BJ (cell line): ENCODE measurements at regions of chr10 and their contacts with region 1.

Region 1: DNA sequence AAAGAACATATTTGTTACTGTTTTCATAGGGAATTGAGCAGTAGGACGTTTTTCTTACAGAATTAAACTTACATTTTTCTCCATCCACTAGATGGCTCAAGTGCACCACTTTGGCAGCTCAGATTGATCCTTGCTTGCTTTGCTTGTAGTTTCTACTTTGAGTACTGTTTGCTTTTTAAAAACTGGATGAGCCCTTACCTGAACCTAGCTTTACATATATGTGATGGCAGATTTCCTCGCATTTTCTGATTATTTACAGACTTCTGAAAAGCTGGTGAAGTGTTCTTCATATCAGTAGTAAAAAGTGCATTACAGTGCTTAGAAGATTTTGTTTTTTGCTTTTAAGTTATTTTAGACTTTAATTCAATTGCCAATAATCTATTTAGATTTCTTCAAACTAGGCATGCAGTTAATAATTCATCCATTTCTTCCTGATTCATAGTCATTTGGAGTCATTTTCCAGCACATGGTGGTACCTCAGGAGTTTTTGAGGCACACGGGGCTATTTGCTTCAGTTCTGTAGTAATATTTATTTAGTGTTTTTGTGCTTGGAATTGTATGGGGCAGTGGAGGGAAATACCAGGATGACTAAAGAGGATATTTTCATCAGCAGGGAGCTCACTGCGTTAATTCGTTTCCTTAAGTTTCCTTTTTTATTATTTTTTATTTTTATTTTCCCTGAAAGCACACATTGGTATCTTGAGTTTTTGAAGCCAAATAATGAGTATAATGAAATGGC is 57.3 kb downstream of the MAPK8 start:
- DNase-seq: peak; percentile 37
- H3K4me3 ChIP-seq: no peak overlapping the region
- H3K27me3 ChIP-seq: no peaks in the 10 kb centered on the region
- CTCF ChIP-seq: peak; percentile 64

Region 2: DNA sequence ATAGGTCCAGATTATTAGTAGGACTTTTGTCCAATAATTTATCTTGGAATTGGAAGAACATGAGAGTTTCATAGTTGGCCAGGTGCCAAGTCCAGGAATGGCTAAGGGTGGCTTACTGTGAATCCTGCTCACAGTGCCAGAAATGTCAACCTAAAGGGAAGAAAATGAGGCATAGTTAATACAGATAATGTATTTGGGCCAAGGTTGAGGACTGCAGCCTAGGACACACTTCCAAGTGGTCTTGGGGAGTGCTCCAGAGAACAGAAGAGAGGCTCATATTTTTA is 20.9 kb after region 1 on chr10:
- CTCF ChIA-PET with region 1: interaction called, 13 read pairs
- POLR2A ChIA-PET with region 1: no interaction called
- DNase-seq: no peak
- H3K4me3 ChIP-seq: no peak overlapping the region
- H3K27me3 ChIP-seq: no peaks in the 10 kb centered on the region
- CTCF ChIP-seq: no peak

Region 3: DNA sequence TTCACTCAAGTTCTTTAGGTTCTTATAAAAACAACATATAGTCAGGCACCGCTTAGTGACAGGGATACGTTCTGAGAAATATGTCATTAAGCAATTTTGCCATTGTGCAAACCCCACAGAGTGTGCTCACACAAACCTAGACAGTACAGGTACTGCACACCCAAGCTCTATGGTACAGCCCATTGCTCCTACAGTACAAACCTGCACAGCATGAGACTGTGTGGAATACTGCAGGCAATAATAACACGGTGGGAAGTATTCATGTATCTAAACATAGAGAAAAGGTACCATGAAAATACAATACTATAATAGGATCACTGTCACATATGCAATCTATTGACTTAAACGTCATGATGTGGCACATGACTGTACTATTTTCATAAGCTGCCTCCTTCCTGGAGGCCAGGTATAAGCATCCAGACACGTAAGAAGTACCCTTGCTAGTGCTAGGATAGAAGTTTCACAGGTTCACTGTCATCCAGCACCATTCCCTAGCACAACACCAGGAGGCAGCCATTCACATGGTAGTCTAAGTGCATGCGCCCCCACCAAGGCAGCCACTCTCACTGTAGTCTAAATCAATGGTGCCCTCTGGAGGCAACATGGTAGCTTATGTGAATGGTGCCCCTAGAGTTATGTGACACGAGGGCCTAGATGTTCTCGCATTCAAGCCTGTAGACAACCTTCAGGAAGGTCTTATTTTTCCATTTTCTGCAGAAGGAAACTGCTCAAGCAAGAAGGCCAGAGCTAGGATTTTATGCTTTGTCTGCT is 142.5 kb after region 1 on chr10:
- CTCF ChIA-PET with region 1: interaction called, 38 read pairs
- POLR2A ChIA-PET with region 1: no interaction called
- DNase-seq: no peak
- H3K4me3 ChIP-seq: no peak overlapping the region
- H3K27me3 ChIP-seq: no peaks in the 10 kb centered on the region
- CTCF ChIP-seq: peak; percentile 27; the same call in 1 of the 2 replicates

Region 4: GRCh38 chr10:48523820-48524758 is 160.3 kb after region 1 on chr10:
- CTCF ChIA-PET with region 1: interaction called, 15 read pairs
- POLR2A ChIA-PET with region 1: no interaction called
- DNase-seq: no peak
- H3K4me3 ChIP-seq: peak overlapping the region; percentile 56
- H3K27me3 ChIP-seq: no peaks in the 10 kb centered on the region
- CTCF ChIP-seq: peak; percentile 53

Region 5: GRCh38 chr10:48551861-48552591 is 188.2 kb after region 1 on chr10:
- CTCF ChIA-PET with region 1: interaction called, 30 read pairs
- POLR2A ChIA-PET with region 1: no interaction called
- DNase-seq: no peak
- H3K4me3 ChIP-seq: no peak overlapping the region
- H3K27me3 ChIP-seq: no peaks in the 10 kb centered on the region
- CTCF ChIP-seq: peak; percentile 75

Region 6: DNA sequence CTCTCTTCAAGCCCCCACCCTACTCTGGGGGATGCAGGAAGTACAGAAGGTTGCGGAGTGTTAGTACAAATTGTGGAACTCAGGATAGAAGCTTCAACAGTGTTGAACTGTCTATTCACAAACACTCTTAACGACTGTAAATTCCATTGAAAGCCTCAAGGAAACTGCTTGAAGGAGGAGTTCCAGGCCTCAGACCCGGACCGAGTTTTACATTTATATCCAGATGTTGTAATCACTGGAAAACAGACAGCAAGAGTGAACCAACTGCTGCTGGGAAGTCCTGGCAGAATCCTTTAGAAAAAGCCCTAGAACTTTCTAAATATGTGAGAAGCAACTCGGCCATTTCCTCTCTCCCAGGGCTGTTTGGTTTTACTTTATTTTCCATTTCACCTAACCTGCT is 660.0 kb after region 1 on chr10:
- CTCF ChIA-PET with region 1: no interaction called
- POLR2A ChIA-PET with region 1: no interaction called
- DNase-seq: peak; percentile 17
- H3K4me3 ChIP-seq: no peak overlapping the region
- H3K27me3 ChIP-seq: no peaks in the 10 kb centered on the region
- CTCF ChIP-seq: no peak